Dorsolateral prefrontal cortex (tissue), 120 donors: ENCODE measurements at regions of chr7 and their contacts with region 1.

Region 1: GRCh38 chr7:75762314-75762917 is 9.6 kb downstream of the CCL26 start:
- DNase-seq: no peak
- H3K4me3 ChIP-seq: no peak overlapping the region
- H3K27ac ChIP-seq: no peak overlapping the region
- H3K27me3 ChIP-seq: no peaks in the 10 kb centered on the region
- CTCF ChIP-seq: peak; percentile 53 to 89 (median 79)

Region 2: DNA sequence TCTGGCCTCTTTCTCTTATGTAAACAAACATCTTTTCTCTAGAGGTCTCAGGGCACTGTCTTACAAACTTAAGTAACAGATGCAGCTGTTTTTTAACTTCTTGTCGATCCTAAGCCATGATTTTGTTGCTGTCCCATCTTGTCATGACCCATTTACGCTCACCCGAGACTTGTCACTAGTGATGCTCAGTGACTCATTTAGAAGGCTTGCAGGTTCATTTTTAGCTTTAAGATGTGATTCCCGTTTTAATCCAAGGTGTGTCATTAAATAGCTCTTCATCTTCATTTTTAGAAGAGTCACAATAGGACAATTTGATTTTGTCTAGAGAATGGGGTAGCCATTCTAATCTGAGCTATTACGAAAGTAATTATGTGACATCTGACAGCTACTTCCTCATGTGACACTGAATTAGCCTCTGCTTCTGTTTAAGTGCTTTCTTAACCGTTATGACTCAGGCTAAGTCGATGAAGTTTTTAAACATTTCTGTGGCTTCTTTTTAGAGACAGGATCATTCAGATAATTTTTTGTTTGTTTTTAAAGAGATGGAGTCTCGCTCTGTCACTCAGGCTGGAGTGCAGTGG is 227.6 kb before region 1 on chr7:
- intact Hi-C with region 1: loop called in 1 of 2 experiments (anchors 5 kb)
- DNase-seq: no peak
- H3K4me3 ChIP-seq: no peak overlapping the region
- H3K27ac ChIP-seq: peak overlapping the region in 5 of 59 donors; percentile 1 to 32 (median 7)
- H3K27me3 ChIP-seq: no peaks in the 10 kb centered on the region
- CTCF ChIP-seq: no peak

Region 3: GRCh38 chr7:75546237-75547015 is 216.0 kb before region 1 on chr7:
- intact Hi-C with region 1: no loop called
- DNase-seq: no peak
- H3K4me3 ChIP-seq: no peak overlapping the region
- H3K27ac ChIP-seq: peak overlapping the region in 1 of 59 donors; percentile 24
- H3K27me3 ChIP-seq: no peaks in the 10 kb centered on the region
- CTCF ChIP-seq: no peak

Region 4: GRCh38 chr7:75575488-75576121 is 186.8 kb before region 1 on chr7:
- intact Hi-C with region 1: loop called in 1 of 2 experiments (anchors 5 kb)
- DNase-seq: peak in 1 of 10 donors; percentile 28
- H3K4me3 ChIP-seq: no peak overlapping the region
- H3K27ac ChIP-seq: peak overlapping the region in 36 of 59 donors; percentile 3 to 72 (median 48)
- H3K27me3 ChIP-seq: no peaks in the 10 kb centered on the region
- CTCF ChIP-seq: no peak

Region 5: DNA sequence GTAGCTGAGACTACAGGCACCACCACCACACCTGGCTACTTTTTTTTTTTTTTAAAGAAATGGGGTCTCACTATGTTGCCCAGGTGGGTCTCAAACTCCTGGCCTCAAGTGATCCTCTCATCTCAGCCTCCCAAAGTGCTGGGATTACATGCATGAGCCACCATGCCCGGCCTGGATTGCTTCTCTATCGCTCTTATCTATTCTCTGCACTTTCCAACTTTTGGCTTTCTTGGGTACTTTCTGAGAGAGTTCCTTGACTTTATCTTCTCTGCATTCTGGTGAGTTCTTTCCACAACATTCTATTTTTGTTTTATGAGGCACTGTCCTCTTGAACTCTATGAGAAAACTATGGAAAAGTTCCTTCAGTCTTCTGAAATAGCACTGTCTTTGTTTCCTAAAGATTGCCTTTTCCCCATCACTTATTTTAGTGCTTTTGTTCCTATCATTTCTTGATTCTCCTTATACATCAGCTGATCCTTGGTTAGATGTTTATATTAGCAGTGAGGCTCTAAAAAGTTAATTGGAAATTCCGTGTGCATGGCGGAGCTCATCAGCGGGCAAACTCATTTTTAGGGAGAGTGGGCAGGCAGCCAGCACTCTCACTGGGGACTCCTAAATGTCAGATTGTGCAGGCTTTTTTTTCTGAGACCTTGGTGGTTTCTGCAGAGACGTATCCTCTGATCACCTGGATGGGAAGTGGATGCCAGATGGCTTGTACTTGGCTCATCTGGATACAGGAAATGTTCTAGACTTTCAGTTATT is 67.6 kb before region 1 on chr7:
- intact Hi-C with region 1: loop called in 1 of 2 experiments (anchors 5 kb)
- DNase-seq: no peak
- H3K4me3 ChIP-seq: no peak overlapping the region
- H3K27ac ChIP-seq: peak overlapping the region in 29 of 59 donors; percentile 1 to 59 (median 22)
- H3K27me3 ChIP-seq: no peaks in the 10 kb centered on the region
- CTCF ChIP-seq: no peak